Right ventricle myocardium inferior (tissue), 1 donor: ENCODE measurements at regions of chr17 and their contacts with region 1.

Region 1: GRCh38 chr17:58417300-58418092 is at the start of gene RNF43:
- DNase-seq: peak; percentile 78
- ATAC-seq: peak; percentile 99
- total RNA-seq, gene RNF43: 4.4 TPM

Region 2: DNA sequence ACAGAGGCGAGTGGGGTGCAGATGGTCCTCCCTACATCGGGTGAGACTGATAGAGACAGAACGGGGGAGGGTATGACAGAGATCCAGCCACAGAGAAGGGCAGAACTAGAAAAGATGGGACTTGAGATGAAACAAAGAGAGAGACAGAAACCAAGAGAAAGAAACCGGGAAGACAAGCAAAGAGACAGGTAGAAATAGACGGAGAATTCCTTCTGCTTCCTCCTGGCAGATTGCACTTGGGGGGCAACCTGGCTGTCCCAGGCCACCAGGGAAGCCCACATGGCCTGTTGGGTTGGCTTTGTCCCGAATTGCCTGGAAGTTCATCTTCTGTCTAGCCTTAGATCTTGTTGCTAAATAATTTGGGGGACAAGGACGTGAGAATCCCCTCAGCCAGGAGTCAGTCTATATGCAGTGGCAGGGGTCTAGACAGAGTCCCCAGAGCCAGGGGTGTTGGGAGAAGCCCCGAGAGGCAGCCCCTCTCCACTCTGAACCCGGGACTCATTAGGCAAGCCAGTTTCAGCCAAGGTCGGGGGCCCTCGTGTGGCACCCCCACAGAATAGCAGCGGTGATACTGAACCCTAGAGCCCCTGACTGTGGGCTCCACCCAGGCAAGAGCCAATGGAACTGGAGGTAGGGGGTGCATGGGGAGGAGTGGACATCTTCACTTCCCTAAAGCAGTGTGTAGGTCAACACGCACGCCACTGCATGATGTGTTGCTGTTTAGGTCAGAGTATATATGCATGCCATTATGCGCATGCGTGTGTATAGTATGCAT is 88.3 kb before region 1 on chr17:
- intact Hi-C with region 1: loop called (anchors 10 kb)
- DNase-seq: no peak
- ATAC-seq: peak; percentile 28

Region 3: DNA sequence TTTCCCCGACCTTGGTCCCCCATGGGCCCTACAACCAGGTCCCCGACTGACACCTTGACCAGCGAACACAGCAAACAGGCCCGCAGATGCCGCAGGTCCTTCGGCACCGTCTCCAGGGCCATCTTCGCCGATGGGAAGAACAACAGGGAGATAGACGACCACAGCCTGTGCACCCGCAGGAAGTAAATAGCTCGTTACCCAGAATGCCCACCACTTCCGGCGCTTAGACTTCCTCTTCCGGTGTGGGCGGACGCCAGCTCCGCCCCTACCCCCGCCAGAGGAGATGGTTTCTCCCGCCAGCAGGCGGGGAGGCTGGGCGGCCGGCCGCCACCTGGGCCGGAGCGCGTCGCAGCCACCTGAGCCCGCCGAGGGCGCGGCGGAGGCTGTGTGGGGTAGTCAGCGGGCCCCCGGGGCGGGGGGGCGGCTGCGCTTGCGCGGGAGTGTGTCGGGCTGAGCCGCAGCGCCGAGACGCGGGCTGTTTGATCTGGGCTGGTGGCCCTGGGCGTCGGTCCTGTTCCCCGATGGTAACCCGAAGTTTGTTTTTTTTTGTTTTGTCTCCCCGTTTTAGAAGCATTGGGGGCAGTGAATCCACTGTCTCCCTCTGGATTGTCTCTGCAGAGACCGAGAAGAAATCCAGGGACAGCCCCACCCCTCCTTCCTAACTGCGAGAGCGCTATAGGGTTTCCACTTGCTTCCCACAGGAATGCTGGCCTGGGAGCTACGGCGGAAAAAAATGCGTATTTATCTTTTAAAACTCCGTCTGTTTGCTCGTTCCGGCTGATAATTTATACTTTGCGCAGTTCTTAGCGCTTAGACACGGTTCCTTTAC is 65.3 kb before region 1 on chr17 and contains the start of gene SUPT4H1:
- intact Hi-C with region 1: loop called (anchors 1 kb)
- DNase-seq: peak; percentile 90
- ATAC-seq: peak; percentile 97
- total RNA-seq, gene SUPT4H1: 58.2 TPM

Region 4: GRCh38 chr17:58402047-58402446 is 15.4 kb before region 1 on chr17:
- intact Hi-C with region 1: no loop called
- DNase-seq: no peak
- ATAC-seq: no peak